Heart left ventricle (tissue), 16 donors: ENCODE measurements at regions of chr12 and their contacts with region 1.

Region 1: DNA sequence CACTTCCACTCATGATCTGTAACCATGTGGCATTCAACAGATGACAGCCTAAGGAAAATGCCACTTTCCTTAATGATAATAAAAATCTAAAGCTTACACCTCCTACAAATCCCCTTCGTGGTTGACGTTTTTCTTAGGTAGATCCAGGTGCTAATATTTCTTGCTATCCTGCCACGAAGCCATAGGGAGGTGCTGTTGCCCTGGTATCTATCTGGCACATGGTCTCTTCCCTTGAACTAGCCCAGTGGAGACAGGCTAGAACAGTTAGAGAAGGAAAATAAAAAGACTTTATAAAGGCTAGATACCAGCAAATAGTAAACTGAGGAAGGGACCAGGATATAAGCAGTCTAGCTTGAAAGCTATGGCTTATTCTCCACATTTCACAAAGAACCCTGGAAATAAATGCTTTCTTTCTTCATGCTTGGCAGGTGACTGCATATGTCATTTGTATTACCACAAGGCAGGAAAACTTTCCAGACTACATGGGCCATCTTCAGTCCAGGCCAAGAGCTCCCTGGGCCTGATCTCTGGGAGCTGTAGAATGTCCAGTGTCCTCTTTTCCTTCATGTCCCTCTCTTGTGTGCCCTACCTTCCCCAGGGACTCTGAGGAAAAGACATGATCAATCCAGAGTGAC is 15.3 kb downstream of the SPIC start:
- DNase-seq: no peak
- ATAC-seq: peak; percentile 47 to 85 (median 80)
- H3K4me3 ChIP-seq: no peak overlapping the region
- H3K27ac ChIP-seq: peak overlapping the region in 1 of 12 donors; percentile 13
- H3K4me1 ChIP-seq: peaks cover 0 to 14% (median 0%) of the 10 kb centered on the region in 12 donors
- H3K27me3 ChIP-seq: no peaks in the 10 kb centered on the region
- CTCF ChIP-seq: peak; percentile 11 to 55 (median 41)
- POLR2A ChIP-seq: no peak

Region 2: DNA sequence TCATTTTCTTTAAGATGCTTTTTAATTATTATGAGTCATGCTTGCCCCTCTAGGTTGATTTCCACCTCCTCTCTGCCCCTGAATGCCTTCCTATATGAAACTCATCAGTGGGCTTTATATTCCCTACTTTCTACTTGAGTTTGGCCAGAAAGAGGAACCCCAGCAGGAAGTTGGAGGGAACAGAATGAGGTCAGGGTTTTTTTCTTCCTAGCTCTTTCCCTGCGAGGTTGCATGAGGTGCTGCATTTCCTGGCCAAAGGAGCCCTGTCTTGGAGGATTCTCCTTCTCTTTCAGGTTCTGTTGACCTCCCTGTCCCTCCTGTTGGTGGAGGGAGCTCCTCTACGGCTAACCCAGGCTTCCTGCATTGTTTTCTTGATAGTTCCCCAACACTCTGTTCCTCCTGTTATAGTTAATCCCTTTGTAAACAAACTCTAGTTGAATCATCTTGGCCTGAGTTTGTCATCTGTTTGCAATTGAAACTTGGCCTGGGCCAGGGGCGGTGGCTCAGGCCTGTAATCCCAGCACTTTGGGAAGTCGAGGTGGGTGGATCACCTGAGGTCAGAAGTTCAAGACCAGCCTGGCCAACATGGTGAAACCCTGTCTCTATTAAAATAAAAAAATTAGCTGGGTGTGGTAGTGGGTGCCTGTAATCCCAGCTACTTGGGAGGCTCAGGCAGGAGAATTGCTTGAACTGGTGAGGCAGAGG is 30.6 kb before region 1 on chr12:
- intact Hi-C with region 1: loop called in 1 of 10 experiments (anchors 2 kb)
- DNase-seq: no peak
- ATAC-seq: no peak
- H3K4me3 ChIP-seq: no peak overlapping the region
- H3K27ac ChIP-seq: peak overlapping the region in 1 of 12 donors; percentile 60
- H3K4me1 ChIP-seq: peaks cover 0 to 26% (median 0%) of the 10 kb centered on the region in 12 donors
- H3K27me3 ChIP-seq: no peaks in the 10 kb centered on the region
- CTCF ChIP-seq: no peak
- POLR2A ChIP-seq: no peak

Region 3: GRCh38 chr12:101697197-101697929 is 207.0 kb after region 1 on chr12 and contains the start of gene CHPT1:
- intact Hi-C with region 1: loop called in 1 of 10 experiments (anchors 10 kb)
- DNase-seq: peak; percentile 79 to 92 (median 90)
- ATAC-seq: peak; percentile 73 to 78 (median 76)
- H3K4me3 ChIP-seq: peak within 1 kb of the TSS; percentile 70 to 96 (median 90)
- H3K27ac ChIP-seq: peak within 1 kb of the TSS; percentile 86 to 98 (median 94)
- H3K4me1 ChIP-seq: peaks cover 0 to 47% (median 23%) of the 10 kb centered on the region in 12 donors
- H3K27me3 ChIP-seq: no peaks in the 10 kb centered on the region
- CTCF ChIP-seq: peak in 1 of 12 donors; percentile 4
- POLR2A ChIP-seq: peak; percentile 22 to 57
- total RNA-seq, gene CHPT1: 84.2 to 208 (median 98.9) TPM

Region 4: DNA sequence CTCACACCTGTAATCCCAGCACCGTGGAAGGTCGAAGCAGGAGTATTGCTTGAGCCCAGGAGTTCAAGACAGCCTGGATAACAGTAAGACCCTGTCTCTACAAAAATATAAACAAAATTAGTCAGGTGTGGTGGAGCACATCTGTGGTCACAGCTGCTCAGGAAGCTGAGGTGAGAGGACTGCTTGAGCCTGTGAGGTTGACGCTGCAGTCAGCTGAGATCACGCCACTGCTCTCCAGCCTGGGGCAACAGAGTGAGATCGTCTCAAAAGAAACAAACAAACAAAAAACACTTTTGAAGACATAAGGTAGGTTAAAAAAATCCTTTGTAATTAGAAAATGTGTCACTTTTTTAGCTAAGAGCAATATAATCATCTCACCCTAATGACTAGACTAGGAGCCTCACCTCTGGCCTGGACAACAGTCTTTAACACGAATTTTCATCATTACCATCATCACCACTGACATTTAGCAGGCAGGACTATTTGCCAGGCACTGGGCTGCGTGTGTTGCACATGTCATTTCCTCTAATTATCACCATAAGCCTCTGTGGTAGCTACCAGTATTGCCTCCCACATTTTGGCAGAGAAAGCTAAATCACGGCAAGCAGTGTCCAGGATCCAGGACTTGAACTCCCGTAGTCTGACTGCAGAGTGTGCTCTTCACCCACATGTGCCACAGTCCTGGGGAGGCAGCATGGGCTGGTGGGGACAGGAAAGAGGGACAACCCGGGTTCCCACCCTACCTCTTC is 253.5 kb after region 1 on chr12:
- intact Hi-C with region 1: loop called in 1 of 10 experiments (anchors 10 kb)
- DNase-seq: no peak
- ATAC-seq: peak in 1 of 4 donors; percentile 33
- H3K4me3 ChIP-seq: no peak overlapping the region
- H3K27ac ChIP-seq: no peak overlapping the region
- H3K4me1 ChIP-seq: peaks cover 0 to 7% (median 0%) of the 10 kb centered on the region in 12 donors
- H3K27me3 ChIP-seq: no peaks in the 10 kb centered on the region
- CTCF ChIP-seq: no peak
- POLR2A ChIP-seq: no peak